ENCODE measurements at regions of chr12 and their contacts with region 1.

Region 1: DNA sequence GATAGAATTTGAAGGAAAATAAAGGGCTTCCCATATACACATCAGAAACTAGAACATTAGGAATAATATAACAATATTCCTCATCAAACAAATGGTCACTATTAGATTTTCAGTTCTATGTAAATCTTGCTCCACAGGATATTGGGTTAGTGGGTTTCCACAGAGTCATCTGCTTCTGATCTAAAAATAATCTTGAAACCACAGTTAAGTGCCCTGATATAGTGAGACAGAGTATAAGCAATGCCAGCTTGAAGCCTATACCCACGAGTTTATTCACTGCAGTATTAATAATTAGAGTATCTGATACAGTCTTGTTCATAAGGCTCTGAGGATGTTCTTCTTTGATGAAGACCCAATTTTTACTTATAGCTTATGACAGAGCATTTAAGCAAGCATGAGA is 74.5 kb upstream of the ATF7IP start:
- DNase-seq: no peak
- H3K4me3 ChIP-seq: no peak overlapping the region
- H3K27ac ChIP-seq: no peak overlapping the region
- H3K4me1 ChIP-seq: no peaks in the 10 kb centered on the region
- H3K27me3 ChIP-seq: no peaks in the 10 kb centered on the region
- CTCF ChIP-seq: no peak
- EP300 ChIP-seq: no peak
- POLR2A ChIP-seq: no peak

Region 2: GRCh38 chr12:14356147-14356546 is 65.2 kb after region 1 on chr12:
- intact Hi-C with region 1: loop called in 1 of 4 experiments (anchors 10 kb)
- DNase-seq: no peak
- H3K4me3 ChIP-seq: no peak overlapping the region
- H3K27ac ChIP-seq: no peak overlapping the region
- H3K4me1 ChIP-seq: no peaks in the 10 kb centered on the region
- H3K27me3 ChIP-seq: no peaks in the 10 kb centered on the region
- CTCF ChIP-seq: no peak
- EP300 ChIP-seq: no peak
- POLR2A ChIP-seq: no peak